GM12878 (cell line): ENCODE measurements at regions of chr9 and their contacts with region 1.

Region 1: GRCh38 chr9:97411789-97412625 is at the start of gene TDRD7:
- DNase-seq: peak; percentile 50
- ATAC-seq: peak; percentile 85
- H3K4me3 ChIP-seq: peak within 1 kb of the TSS; percentile 86
- H3K27ac ChIP-seq: peak within 1 kb of the TSS; percentile 23
- H3K4me1 ChIP-seq: peaks cover 3% of the 10 kb centered on the region; the same call in 1 of the 2 replicates
- H3K27me3 ChIP-seq: no peaks in the 10 kb centered on the region; a peak in 1 of 4 replicates
- CTCF ChIP-seq: peak; percentile 96 to 100 (median 99); a peak in 5 of 6 replicates
- EP300 ChIP-seq: peak; percentile 16 to 49; a peak in 1 of 4 replicates
- POLR2A ChIP-seq: peak; percentile 69
- RAD21 ChIP-seq: peak; percentile 71
- polyA plus RNA-seq, gene TDRD7: 5.7 to 8.3 TPM

Region 2: GRCh38 chr9:97459099-97459725 is 47.2 kb after region 1 on chr9:
- CTCF ChIA-PET with region 1: interaction called, 5 read pairs
- POLR2A ChIA-PET with region 1: no interaction called
- RAD21 ChIA-PET with region 1: no interaction called
- SMC1A ChIA-PET with region 1: interaction called, 3 read pairs
- in situ Hi-C with region 1: loop called (anchors 5 kb)
- intact Hi-C with region 1: no loop called
- DNase-seq: no peak
- ATAC-seq: no peak
- H3K4me3 ChIP-seq: no peak overlapping the region
- H3K27ac ChIP-seq: no peak overlapping the region
- H3K4me1 ChIP-seq: no peaks in the 10 kb centered on the region
- H3K27me3 ChIP-seq: no peaks in the 10 kb centered on the region
- CTCF ChIP-seq: no peak
- EP300 ChIP-seq: no peak
- POLR2A ChIP-seq: no peak
- RAD21 ChIP-seq: no peak

Region 3: GRCh38 chr9:97548819-97549540 is 137.0 kb after region 1 on chr9:
- CTCF ChIA-PET with region 1: no interaction called
- POLR2A ChIA-PET with region 1: no interaction called
- RAD21 ChIA-PET with region 1: no interaction called
- SMC1A ChIA-PET with region 1: no interaction called
- in situ Hi-C with region 1: no loop called
- intact Hi-C with region 1: no loop called
- DNase-seq: no peak
- ATAC-seq: no peak
- H3K4me3 ChIP-seq: no peak overlapping the region
- H3K27ac ChIP-seq: no peak overlapping the region
- H3K4me1 ChIP-seq: no peaks in the 10 kb centered on the region
- H3K27me3 ChIP-seq: no peaks in the 10 kb centered on the region
- CTCF ChIP-seq: no peak
- EP300 ChIP-seq: no peak
- POLR2A ChIP-seq: no peak
- RAD21 ChIP-seq: no peak

Region 4: GRCh38 chr9:97696803-97697601 is 285.0 kb after region 1 on chr9 and contains the start of gene XPA:
- CTCF ChIA-PET with region 1: no interaction called
- POLR2A ChIA-PET with region 1: no interaction called
- RAD21 ChIA-PET with region 1: no interaction called
- SMC1A ChIA-PET with region 1: no interaction called
- in situ Hi-C with region 1: no loop called
- intact Hi-C with region 1: no loop called
- DNase-seq: peak; percentile 80
- ATAC-seq: peak; percentile 94
- H3K4me3 ChIP-seq: peak within 1 kb of the TSS; percentile 92
- H3K27ac ChIP-seq: peak within 1 kb of the TSS; percentile 85
- H3K4me1 ChIP-seq: peaks cover 18% of the 10 kb centered on the region
- H3K27me3 ChIP-seq: no peaks in the 10 kb centered on the region
- CTCF ChIP-seq: no peak
- EP300 ChIP-seq: no peak
- POLR2A ChIP-seq: peak; percentile 95
- RAD21 ChIP-seq: no peak
- polyA plus RNA-seq, gene XPA: 7.1 to 11.2 TPM